Breast epithelium (tissue), 4 donors: ENCODE measurements at regions of chr5 and their contacts with region 1.

Region 1: GRCh38 chr5:17127743-17128231 is 89.6 kb upstream of the BASP1 start:
- DNase-seq: no peak
- H3K4me3 ChIP-seq: no peak overlapping the region
- H3K27ac ChIP-seq: no peak overlapping the region
- H3K4me1 ChIP-seq: no peaks in the 10 kb centered on the region
- H3K27me3 ChIP-seq: no peaks in the 10 kb centered on the region
- CTCF ChIP-seq: no peak
- POLR2A ChIP-seq: no peak

Region 2: DNA sequence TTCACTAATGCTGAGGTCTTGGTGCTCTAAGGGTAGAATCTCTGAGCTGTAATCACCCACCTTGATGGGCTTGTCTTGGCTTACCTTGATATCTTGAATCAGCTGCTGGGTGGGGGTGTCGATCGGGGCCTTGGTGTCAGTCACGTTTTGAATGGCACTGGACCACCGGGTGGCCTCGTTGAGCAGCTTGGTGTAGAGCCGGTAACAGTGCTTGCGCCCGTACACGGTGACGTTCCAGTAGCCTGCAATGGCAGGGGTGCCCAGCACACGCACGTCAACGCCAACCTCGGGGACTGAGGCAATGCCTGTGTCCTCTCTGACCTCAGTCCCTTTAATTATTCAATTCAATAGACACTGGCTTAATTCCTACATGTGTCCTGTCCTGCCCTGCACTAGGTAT is 447.9 kb before region 1 on chr5:
- intact Hi-C with region 1: loop called (anchors 10 kb)
- DNase-seq: no peak
- H3K4me3 ChIP-seq: no peak overlapping the region
- H3K27ac ChIP-seq: no peak overlapping the region
- H3K4me1 ChIP-seq: no peaks in the 10 kb centered on the region
- H3K27me3 ChIP-seq: no peaks in the 10 kb centered on the region
- CTCF ChIP-seq: no peak
- POLR2A ChIP-seq: no peak